Left cardiac atrium (tissue), 4 donors: ENCODE measurements at regions of chr1 and their contacts with region 1.

Region 1: GRCh38 chr1:99374109-99374508 is 109.8 kb downstream of the PLPPR4 start:
- DNase-seq: no peak
- ATAC-seq: no peak

Region 2: DNA sequence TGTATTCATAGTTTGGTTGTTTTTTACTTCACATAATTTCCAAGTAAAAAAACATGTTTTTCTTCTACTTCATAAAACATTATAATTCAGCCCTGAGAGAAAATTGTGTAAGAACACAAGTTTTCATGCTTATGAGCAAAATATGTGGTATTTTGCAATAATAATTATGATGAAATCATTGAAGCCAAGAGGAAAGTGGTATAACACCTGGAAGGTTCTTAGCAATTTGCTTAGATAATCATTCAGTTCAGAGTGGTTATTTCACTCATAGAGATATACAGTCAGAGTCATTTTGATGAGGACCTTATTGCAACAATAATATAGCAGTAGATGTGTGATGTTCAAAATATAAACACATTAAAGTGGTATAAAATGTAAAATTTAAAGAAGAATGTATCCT is 15.3 kb before region 1 on chr1:
- intact Hi-C with region 1: loop called in 1 of 2 experiments (anchors 1 kb)
- DNase-seq: no peak
- ATAC-seq: peak in 1 of 2 donors; percentile 27

Region 3: DNA sequence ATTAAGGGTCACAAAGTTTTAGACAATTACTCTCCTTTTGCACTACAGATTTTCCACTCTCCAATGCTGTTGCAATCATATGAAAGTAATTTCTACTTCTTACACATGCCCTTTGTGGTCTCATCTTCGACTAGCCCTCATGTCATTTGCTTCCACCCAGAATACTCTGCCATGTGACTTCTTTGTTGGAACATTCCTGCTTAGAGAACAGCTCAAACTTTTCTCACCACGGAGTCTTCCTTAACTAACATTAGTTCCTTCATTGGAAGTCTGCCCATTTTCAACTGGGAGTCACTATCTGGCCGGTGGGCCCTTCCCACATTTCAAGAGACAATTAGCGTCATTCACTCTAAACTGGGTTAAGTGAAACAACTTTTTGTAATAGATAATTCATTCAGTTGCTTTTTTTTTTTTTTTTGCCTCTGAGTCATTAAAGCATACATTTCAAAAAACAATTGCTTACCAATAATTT is 129.2 kb after region 1 on chr1:
- intact Hi-C with region 1: no loop called
- DNase-seq: peak; percentile 25
- ATAC-seq: peak; percentile 63 to 82